ENCODE measurements at regions of chr11 and their contacts with region 1.

Region 1: DNA sequence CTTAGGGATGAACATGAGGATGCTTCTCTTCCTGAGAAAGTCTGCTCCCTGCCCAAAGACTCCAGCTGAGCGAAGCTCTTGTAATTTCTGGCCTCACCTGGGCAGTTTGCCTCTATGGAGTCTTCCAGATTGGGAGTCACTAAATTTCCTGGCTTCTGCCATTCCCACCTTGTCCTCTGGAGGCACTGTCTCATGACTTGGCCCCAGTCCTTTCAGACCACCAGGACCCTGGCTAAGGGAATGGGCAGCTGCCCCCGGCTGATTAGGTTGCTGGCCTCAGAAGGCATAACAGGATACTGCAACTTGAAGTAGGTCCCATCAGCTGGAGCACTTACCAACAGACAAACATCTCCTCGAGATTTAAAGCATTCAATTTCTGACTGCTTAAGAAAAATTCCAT is 128.1 kb upstream of the SPON1 start:
- DNase-seq: peak; percentile 6
- H3K4me3 Mint-ChIP-seq: no peak overlapping the region
- H3K27ac Mint-ChIP-seq: no peak overlapping the region
- H3K4me1 Mint-ChIP-seq: peaks cover 15% of the 10 kb centered on the region
- H3K27me3 Mint-ChIP-seq: no peaks in the 10 kb centered on the region

Region 2: DNA sequence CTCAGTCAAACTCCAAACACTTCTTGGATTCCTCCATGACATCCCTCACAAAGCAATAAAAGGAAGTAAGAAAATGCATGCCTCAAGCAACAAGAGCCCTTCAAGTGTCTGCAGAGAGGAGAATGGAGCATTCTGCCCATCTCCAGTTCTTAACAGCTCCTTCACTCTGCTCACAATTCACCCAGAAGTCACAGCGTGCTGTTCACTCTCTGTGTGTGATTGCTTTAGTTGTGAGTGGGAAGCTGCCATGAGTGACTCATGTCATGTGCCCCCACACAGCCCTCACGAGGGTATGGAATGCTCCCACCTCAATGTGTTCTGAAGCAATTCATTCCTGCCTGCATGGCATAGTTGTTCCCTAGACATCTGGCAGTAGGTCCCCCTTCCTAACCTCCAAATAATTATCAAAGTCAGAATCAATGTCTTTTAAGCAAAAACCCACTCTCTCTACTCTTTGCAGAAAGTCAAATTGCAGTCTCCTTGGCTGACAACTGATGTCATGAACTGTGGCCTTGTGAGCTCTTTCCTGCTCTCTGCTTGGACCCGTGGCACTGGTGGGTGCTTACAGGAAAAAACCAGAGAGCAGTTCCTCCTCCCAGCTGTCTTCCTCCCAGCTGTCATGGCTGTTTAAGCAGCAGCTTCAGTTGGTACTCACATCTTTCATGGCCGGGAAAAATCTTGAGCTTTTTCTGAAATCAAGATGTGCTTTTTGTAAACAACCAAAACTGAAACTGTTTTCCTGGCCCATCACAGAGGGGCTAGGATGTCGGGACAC is 16.0 kb after region 1 on chr11:
- CTCF ChIA-PET with region 1: interaction called, 10 read pairs
- intact Hi-C with region 1: no loop called
- DNase-seq: no peak
- H3K4me3 Mint-ChIP-seq: no peak overlapping the region
- H3K27ac Mint-ChIP-seq: no peak overlapping the region
- H3K4me1 Mint-ChIP-seq: peaks cover 12% of the 10 kb centered on the region
- H3K27me3 Mint-ChIP-seq: no peaks in the 10 kb centered on the region

Region 3: DNA sequence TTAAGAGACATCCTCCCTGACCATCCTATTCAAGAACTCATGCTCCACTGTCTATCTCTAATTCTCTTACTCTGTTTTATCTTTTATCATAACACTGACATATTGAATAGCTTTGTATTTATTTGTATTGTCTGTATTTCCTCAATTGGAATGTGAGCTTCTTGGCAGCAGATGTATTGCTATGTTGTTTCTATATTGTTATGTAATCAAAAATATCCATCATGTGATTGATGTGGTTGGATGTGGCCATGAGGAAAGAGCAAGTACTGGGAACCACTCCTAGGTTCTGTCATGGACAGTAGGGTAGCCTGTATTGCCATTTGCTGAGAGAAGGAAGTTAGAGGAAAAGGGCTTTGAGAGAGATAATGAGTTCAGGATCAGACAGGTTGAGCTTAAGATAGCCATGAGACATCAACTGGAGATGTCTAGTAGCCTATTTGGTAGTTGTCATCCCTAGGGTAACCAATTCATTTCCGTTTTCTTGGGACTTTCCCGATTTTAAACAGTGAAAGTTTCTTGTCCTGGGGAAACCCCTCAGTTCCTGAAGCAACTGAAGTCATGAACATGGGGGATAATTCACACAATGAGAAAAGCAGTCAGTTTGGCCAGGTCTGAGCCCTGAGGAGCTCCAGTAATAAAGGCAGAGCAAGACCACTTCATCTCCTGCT is 1684.8 kb after region 1 on chr11:
- CTCF ChIA-PET with region 1: no interaction called
- intact Hi-C with region 1: no loop called
- DNase-seq: no peak
- H3K4me3 Mint-ChIP-seq: no peak overlapping the region
- H3K27ac Mint-ChIP-seq: no peak overlapping the region
- H3K4me1 Mint-ChIP-seq: no peaks in the 10 kb centered on the region
- H3K27me3 Mint-ChIP-seq: no peaks in the 10 kb centered on the region

Measured in activated naive CD4-positive, alpha-beta T cell treated with anti-CD3 and anti-CD28 coated beads for 36 hours (primary cell).